GM18951 (cell line): ENCODE measurements at regions of chr2 and their contacts with region 1.

Region 1: GRCh38 chr2:95578539-95578938 is 13.3 kb upstream of the TRIM43 start:
- POLR2A ChIP-seq: no peak

Region 2: GRCh38 chr2:95500854-95501253 is 77.7 kb before region 1 on chr2:
- in situ Hi-C with region 1: loop called (anchors 10 kb)
- POLR2A ChIP-seq: no peak

Region 3: GRCh38 chr2:95734976-95735890 is 156.7 kb after region 1 on chr2:
- in situ Hi-C with region 1: no loop called
- POLR2A ChIP-seq: no peak